ENCODE measurements at regions of chr1 and their contacts with region 1.

Region 1: DNA sequence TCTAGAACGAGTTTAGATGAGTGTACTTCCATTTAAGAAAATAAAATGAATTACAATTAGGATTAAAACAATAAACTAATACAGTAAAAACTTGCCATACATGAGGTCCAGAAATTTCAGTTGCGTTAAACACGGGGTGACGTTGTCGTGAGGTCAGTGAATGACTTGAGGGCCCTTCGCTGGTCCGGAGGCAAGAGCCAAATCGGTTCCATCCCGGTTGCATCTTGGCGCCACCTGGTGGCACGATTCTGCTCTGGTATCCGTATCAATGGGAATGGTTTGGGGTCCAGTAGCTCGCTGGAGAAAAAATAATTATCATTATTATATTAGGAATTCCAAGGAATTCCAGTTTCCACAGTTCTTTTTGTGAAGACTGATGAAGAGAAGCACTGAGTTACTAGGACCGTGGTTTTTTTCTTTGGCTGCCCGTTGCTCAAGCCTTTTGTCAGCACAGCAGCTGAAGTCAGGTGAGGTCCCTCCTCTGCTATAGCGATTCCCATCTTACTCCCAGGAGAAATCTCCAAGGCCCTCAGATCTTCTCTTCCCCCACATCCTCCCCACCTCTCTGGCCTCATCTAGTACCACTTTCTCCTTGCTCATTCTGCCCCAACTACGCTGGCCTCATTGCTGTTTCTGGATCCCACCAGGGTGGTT is 161.4 kb downstream of the SLC35F3 start:
- DNase-seq: peak; percentile 77
- H3K4me3 ChIP-seq: no peak overlapping the region
- H3K27ac ChIP-seq: no peak overlapping the region
- H3K4me1 ChIP-seq: no peaks in the 10 kb centered on the region
- H3K27me3 ChIP-seq: no peaks in the 10 kb centered on the region
- CTCF ChIP-seq: peak; percentile 88

Region 2: DNA sequence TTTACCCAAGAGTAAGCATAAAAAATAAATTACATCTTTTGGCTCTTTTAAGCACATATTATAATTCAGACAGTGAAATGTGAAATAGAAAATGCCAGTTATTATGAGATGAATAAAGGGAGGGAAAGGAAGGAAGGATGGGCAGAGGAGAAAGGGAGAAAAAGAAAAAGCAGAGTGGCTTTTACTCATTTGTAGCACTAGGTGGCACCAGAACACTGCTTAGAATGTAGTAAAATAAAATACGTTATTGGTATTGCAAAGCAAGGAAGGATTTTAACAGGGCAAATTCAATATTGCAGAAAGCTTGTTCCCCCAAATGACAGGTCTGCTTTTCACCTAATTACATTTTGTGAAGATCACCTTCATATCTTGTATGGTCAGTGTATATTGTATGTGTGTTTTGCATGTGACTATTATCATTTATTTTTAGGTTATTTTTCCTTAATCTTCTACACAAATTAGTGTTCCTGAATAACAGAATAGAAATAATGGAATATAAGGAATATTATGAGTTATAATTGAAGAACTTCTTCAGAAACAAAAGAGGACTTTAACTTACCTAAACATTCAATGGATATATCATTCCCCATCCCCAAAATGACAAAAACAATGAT is 761.3 kb before region 1 on chr1:
- CTCF ChIA-PET with region 1: no interaction called
- POLR2A ChIA-PET with region 1: no interaction called
- intact Hi-C with region 1: loop called (anchors 5 kb)
- DNase-seq: peak; percentile 51
- H3K4me3 ChIP-seq: no peak overlapping the region
- H3K27ac ChIP-seq: no peak overlapping the region
- H3K4me1 ChIP-seq: no peaks in the 10 kb centered on the region
- H3K27me3 ChIP-seq: no peaks in the 10 kb centered on the region
- CTCF ChIP-seq: peak; percentile 77

Region 3: DNA sequence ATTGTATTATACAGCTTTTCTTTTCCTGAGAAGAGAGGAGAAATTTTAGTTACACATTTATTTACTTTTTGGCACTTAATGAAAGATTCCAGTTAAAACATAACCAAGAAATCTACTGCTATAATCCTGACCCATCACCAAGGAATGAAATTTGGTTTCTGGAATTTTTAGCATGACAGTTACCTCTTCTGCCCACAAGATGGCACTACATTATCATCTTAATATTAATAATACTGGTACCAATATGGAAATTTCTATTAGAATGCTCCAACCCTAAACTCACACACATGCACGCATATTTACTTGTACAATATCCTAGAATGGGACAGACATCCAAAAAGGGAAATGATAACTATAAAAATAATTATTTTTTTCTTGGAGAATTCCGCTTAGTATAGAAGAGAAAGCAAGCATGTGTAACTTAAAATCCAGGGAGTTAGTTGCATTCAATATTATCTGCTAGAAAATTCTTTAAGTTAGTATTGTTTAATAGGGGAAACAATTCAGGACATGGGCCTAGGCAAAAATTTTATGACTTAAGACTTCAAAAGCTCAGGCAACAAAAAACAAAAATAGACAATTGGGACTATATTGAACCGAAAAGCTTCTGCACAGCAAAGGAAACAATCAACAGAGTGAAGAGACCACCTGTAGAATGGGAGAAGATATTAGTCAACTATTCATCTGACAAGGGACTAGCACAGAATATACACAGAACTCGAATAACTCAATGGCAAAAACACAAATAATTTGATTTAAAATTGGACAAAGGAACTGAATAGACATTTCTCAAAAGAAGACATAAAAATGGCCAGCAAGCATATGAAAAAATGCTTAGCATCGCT is 701.0 kb before region 1 on chr1:
- CTCF ChIA-PET with region 1: no interaction called
- POLR2A ChIA-PET with region 1: no interaction called
- intact Hi-C with region 1: loop called (anchors 10 kb)
- DNase-seq: peak; percentile 33
- H3K4me3 ChIP-seq: no peak overlapping the region
- H3K27ac ChIP-seq: no peak overlapping the region
- H3K4me1 ChIP-seq: no peaks in the 10 kb centered on the region
- H3K27me3 ChIP-seq: no peaks in the 10 kb centered on the region
- CTCF ChIP-seq: peak; percentile 77

Region 4: GRCh38 chr1:233394860-233395717 is 670.8 kb before region 1 on chr1:
- CTCF ChIA-PET with region 1: no interaction called
- POLR2A ChIA-PET with region 1: no interaction called
- intact Hi-C with region 1: loop called (anchors 2 kb)
- DNase-seq: peak; percentile 74
- H3K4me3 ChIP-seq: no peak overlapping the region
- H3K27ac ChIP-seq: no peak overlapping the region
- H3K4me1 ChIP-seq: no peaks in the 10 kb centered on the region
- H3K27me3 ChIP-seq: no peaks in the 10 kb centered on the region
- CTCF ChIP-seq: peak; percentile 89

Region 5: GRCh38 chr1:233440951-233441401 is 624.9 kb before region 1 on chr1:
- CTCF ChIA-PET with region 1: interaction called, 16 read pairs
- POLR2A ChIA-PET with region 1: no interaction called
- intact Hi-C with region 1: loop called (anchors 1 kb)
- DNase-seq: peak; percentile 83
- H3K4me3 ChIP-seq: no peak overlapping the region
- H3K27ac ChIP-seq: no peak overlapping the region
- H3K4me1 ChIP-seq: no peaks in the 10 kb centered on the region
- H3K27me3 ChIP-seq: no peaks in the 10 kb centered on the region
- CTCF ChIP-seq: peak; percentile 74

Region 6: GRCh38 chr1:233518349-233518748 is 547.6 kb before region 1 on chr1:
- CTCF ChIA-PET with region 1: no interaction called
- POLR2A ChIA-PET with region 1: no interaction called
- intact Hi-C with region 1: loop called (anchors 10 kb)
- DNase-seq: peak; percentile 66
- H3K4me3 ChIP-seq: no peak overlapping the region
- H3K27ac ChIP-seq: no peak overlapping the region
- H3K4me1 ChIP-seq: no peaks in the 10 kb centered on the region
- H3K27me3 ChIP-seq: peaks cover 5% of the 10 kb centered on the region
- CTCF ChIP-seq: peak; percentile 79

Region 7: GRCh38 chr1:233790662-233791375 is 275.1 kb before region 1 on chr1:
- CTCF ChIA-PET with region 1: interaction called, 4 read pairs
- POLR2A ChIA-PET with region 1: no interaction called
- intact Hi-C with region 1: loop called (anchors 10 kb)
- DNase-seq: peak; percentile 67
- H3K4me3 ChIP-seq: no peak overlapping the region
- H3K27ac ChIP-seq: no peak overlapping the region
- H3K4me1 ChIP-seq: no peaks in the 10 kb centered on the region
- H3K27me3 ChIP-seq: no peaks in the 10 kb centered on the region
- CTCF ChIP-seq: peak; percentile 92

Region 8: GRCh38 chr1:234114648-234115307 is 48.9 kb after region 1 on chr1:
- CTCF ChIA-PET with region 1: no interaction called
- POLR2A ChIA-PET with region 1: no interaction called
- intact Hi-C with region 1: no loop called
- DNase-seq: peak; percentile 79
- H3K4me3 ChIP-seq: peak overlapping the region; percentile 23
- H3K27ac ChIP-seq: no peak overlapping the region
- H3K4me1 ChIP-seq: peaks cover 12% of the 10 kb centered on the region
- H3K27me3 ChIP-seq: no peaks in the 10 kb centered on the region
- CTCF ChIP-seq: peak; percentile 81

Region 9: GRCh38 chr1:235128456-235129328 is 1062.8 kb after region 1 on chr1 and contains the start of gene TOMM20:
- CTCF ChIA-PET with region 1: no interaction called
- POLR2A ChIA-PET with region 1: no interaction called
- intact Hi-C with region 1: no loop called
- DNase-seq: peak; percentile 95
- H3K4me3 ChIP-seq: peak within 1 kb of the TSS; percentile 85
- H3K27ac ChIP-seq: peak within 1 kb of the TSS; percentile 94
- H3K4me1 ChIP-seq: no peaks in the 10 kb centered on the region
- H3K27me3 ChIP-seq: no peaks in the 10 kb centered on the region
- CTCF ChIP-seq: no peak
- total RNA-seq, gene TOMM20: 72.6 and 74.0 TPM in 2 replicates

Measured in A673 (cell line).